PC-9 (cell line): ENCODE measurements at regions of chr13 and their contacts with region 1.

Region 1: DNA sequence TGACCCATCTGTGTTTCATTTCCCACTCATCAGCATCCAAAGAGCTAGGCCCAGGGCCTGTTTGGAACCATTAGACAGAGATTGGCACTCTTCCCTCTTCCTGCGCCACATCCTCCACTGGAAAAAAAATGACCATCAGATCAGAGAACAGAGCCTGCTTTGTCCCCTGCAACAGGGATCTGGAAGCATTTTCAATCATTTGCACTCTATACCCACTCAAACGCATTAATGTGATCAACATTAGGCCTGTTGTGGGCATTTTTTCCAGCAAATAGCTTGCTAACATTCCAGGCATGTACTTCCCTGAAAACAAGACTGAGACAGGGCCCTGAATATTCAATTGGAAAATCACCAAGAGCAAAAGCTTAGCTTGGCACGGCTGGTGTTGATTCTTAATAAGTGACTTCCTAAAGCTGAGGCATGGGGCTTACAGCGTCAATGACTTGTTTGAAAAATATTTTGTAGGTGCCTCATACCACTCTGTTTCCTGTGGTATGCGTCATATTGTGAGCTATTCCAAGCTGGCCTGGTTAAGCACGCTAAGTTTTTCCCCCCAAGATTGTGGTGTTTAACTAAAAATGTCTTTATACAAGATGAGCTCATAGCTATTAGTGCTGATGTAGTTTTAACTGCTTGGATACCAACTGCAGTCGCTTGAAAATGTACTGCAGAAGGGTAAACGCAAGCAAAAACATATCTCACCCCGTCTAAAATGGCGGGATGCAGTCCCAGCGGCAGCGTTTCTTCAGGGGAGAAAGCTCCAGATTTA is 404.4 kb downstream of the SPRY2 start:
- DNase-seq: peak; percentile 63 to 98
- H3K4me3 ChIP-seq: peak overlapping the region; percentile 6; the same call in 1 of the 2 replicates
- H3K27ac ChIP-seq: peak overlapping the region; percentile 92
- H3K4me1 ChIP-seq: peaks cover 26% of the 10 kb centered on the region
- H3K27me3 ChIP-seq: no peaks in the 10 kb centered on the region
- CTCF ChIP-seq: no peak

Region 2: GRCh38 chr13:79621449-79621848 is 315.1 kb before region 1 on chr13:
- CTCF ChIA-PET with region 1: no interaction called
- POLR2A ChIA-PET with region 1: no interaction called
- intact Hi-C with region 1: loop called (anchors 2 kb)
- DNase-seq: peak; percentile 0 to 62
- H3K4me3 ChIP-seq: no peak overlapping the region
- H3K27ac ChIP-seq: peak overlapping the region; percentile 96
- H3K4me1 ChIP-seq: peaks cover 26% of the 10 kb centered on the region
- H3K27me3 ChIP-seq: no peaks in the 10 kb centered on the region
- CTCF ChIP-seq: no peak

Region 3: DNA sequence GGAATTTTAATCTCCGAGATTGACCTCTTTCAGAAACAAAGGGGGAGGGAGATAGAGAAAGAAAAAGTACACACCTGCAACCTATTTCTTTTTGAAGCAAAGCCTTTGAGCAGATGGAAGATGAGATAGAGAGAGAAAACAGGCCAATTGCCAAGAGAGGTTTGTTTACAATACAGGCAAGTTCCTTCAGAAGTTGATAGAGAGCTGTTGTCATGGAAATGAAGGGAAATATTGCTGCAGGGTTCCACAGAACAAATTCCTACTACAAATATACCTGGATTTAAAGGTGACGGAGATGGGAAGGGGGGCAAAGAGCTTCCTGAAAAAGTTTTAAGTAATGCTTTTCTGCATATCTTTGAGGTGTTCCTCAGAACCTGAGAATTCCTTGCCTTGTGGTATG is 67.2 kb before region 1 on chr13:
- CTCF ChIA-PET with region 1: no interaction called
- POLR2A ChIA-PET with region 1: no interaction called
- intact Hi-C with region 1: loop called (anchors 1 kb)
- DNase-seq: peak; percentile 32 to 85
- H3K4me3 ChIP-seq: no peak overlapping the region
- H3K27ac ChIP-seq: no peak overlapping the region
- H3K4me1 ChIP-seq: peaks cover 17% of the 10 kb centered on the region
- H3K27me3 ChIP-seq: no peaks in the 10 kb centered on the region
- CTCF ChIP-seq: no peak

Region 4: GRCh38 chr13:79884890-79885289 is 51.7 kb before region 1 on chr13:
- CTCF ChIA-PET with region 1: no interaction called
- POLR2A ChIA-PET with region 1: no interaction called
- intact Hi-C with region 1: no loop called
- DNase-seq: no peak
- H3K4me3 ChIP-seq: no peak overlapping the region
- H3K27ac ChIP-seq: no peak overlapping the region
- H3K4me1 ChIP-seq: no peaks in the 10 kb centered on the region
- H3K27me3 ChIP-seq: no peaks in the 10 kb centered on the region
- CTCF ChIP-seq: no peak

Region 5: GRCh38 chr13:80083853-80084676 is 147.5 kb after region 1 on chr13:
- CTCF ChIA-PET with region 1: interaction called, 3 read pairs
- POLR2A ChIA-PET with region 1: no interaction called
- intact Hi-C with region 1: loop called (anchors 1 kb)
- DNase-seq: peak in 1 of 2 experiments; percentile 82
- H3K4me3 ChIP-seq: no peak overlapping the region
- H3K27ac ChIP-seq: peak overlapping the region; percentile 43; the same call in 1 of the 2 replicates
- H3K4me1 ChIP-seq: peaks cover 53% of the 10 kb centered on the region
- H3K27me3 ChIP-seq: no peaks in the 10 kb centered on the region
- CTCF ChIP-seq: no peak